ENCODE measurements at regions of chr12 and their contacts with region 1.

Region 1: DNA sequence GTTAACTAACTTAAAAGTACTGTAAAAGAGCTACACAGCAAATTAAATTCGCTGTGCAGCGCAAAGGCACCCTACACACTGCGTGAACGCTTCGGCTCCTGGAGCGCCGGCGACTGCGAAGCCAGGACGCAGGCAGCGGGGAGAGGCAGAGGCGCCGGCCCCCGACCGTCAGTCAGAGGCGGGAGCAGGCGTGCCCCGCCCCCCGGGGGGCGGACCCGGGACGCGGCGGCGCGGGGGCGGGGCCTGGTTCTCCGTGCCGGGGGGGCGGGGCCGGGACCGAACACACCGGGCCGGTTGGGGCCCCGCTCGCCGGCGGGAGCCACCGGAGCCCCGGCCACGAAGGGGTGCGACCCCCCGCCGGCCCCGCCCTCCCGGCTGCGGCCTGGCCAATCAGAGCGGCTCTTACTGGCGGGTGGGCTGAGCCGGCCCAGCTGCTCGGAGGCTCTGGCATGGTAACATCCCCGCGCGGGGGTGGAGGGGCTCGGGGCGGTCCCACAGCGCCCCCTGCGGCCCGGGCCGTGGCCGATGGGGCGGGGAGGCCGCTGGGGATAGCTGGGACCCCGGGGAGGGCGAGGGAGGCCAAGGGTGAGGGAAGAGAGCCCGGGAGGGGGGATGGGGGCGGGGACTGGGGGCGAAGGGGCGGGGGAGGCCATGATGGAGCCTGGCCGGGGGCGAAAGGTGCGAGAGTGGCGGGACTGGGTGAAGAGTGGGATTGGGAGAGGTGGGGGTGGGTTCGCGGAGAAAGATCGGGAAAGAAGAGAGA is at the start of gene PRPF40B:
- DNase-seq: peak; percentile 70 to 93 (median 84)
- ATAC-seq: peak; percentile 76
- H3K4me3 ChIP-seq: peak within 1 kb of the TSS; percentile 70
- H3K4me3 Mint-ChIP-seq: peak within 1 kb of the TSS; percentile 92
- H3K27ac ChIP-seq: peak within 1 kb of the TSS; percentile 58 to 66
- H3K27ac Mint-ChIP-seq: peak within 1 kb of the TSS; percentile 92
- H3K4me1 ChIP-seq: peaks cover 29% of the 10 kb centered on the region
- H3K4me1 Mint-ChIP-seq: peaks cover 30% of the 10 kb centered on the region
- H3K27me3 ChIP-seq: no peaks in the 10 kb centered on the region
- H3K27me3 Mint-ChIP-seq: peaks cover 6% of the 10 kb centered on the region
- CTCF ChIP-seq: peak; percentile 23
- total RNA-seq, gene PRPF40B: 4.7 to 6.5 TPM

Region 2: GRCh38 chr12:49366652-49367380 is 256.5 kb before region 1 on chr12:
- CTCF ChIA-PET with region 1: interaction called, 6 read pairs
- POLR2A ChIA-PET with region 1: interaction called, 16 read pairs
- intact Hi-C with region 1: no loop called
- DNase-seq: peak; percentile 69 to 92 (median 81)
- ATAC-seq: peak; percentile 82
- H3K4me3 ChIP-seq: peak overlapping the region; percentile 88
- H3K4me3 Mint-ChIP-seq: peak overlapping the region; percentile 99
- H3K27ac ChIP-seq: peak overlapping the region; percentile 66 to 70
- H3K27ac Mint-ChIP-seq: peak overlapping the region; percentile 76
- H3K4me1 ChIP-seq: peaks cover 15% of the 10 kb centered on the region
- H3K4me1 Mint-ChIP-seq: peaks cover 30% of the 10 kb centered on the region
- H3K27me3 ChIP-seq: no peaks in the 10 kb centered on the region
- H3K27me3 Mint-ChIP-seq: no peaks in the 10 kb centered on the region
- CTCF ChIP-seq: no peak

Region 3: DNA sequence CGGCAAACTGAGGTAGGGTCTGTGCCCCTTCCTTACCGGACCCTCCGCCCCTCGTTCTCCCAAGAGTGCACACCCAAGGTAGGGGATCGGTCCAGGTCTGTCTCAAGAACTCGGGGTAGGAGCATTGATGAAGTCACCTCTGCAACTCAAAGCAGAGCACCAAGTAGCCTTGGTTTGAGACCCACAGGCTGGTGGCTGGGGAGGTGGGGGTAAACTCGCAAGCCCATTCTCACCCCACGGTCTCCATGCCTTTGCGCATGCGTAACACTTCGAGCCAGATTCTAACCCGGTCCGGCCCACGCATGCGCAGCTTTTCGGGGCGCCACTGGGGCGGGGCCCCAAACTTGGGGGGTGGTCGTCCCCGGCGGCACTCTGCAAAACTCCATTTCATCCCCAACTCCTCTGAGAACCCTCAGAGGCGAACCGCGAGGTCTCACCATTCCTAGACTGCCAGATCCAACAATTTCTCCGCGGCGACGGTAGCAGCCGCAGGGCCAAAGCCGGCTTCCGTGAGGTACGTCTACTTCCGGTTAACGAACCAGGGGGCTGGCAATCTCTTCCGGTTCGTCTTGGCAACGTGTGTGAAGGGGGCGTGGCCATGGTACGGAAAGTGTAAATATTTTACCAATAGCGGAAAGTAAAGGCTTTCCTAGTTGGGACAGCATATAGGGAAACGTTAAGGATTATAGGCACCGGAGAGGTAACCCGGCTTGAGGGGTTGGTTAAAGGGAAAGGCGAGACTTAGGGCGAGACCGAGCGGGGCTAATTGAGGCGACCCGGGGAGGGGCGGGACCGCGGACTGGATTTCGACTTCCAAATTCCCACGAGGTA is 55.5 kb before region 1 on chr12 and contains the start of gene MCRS1:
- CTCF ChIA-PET with region 1: interaction called, 5 read pairs
- POLR2A ChIA-PET with region 1: interaction called, 23 read pairs
- intact Hi-C with region 1: loop called (anchors 1 to 2 kb)
- DNase-seq: peak; percentile 82 to 95 (median 88)
- ATAC-seq: peak; percentile 85
- H3K4me3 ChIP-seq: peak within 1 kb of the TSS; percentile 67
- H3K4me3 Mint-ChIP-seq: peak within 1 kb of the TSS; percentile 97
- H3K27ac ChIP-seq: peak within 1 kb of the TSS; percentile 93 to 94
- H3K27ac Mint-ChIP-seq: peak within 1 kb of the TSS; percentile 99
- H3K4me1 ChIP-seq: peaks cover 49% of the 10 kb centered on the region
- H3K4me1 Mint-ChIP-seq: peaks cover 71% of the 10 kb centered on the region
- H3K27me3 ChIP-seq: no peaks in the 10 kb centered on the region
- H3K27me3 Mint-ChIP-seq: no peaks in the 10 kb centered on the region
- CTCF ChIP-seq: no peak
- total RNA-seq, gene MCRS1: 49.0 to 56.4 TPM

Region 4: DNA sequence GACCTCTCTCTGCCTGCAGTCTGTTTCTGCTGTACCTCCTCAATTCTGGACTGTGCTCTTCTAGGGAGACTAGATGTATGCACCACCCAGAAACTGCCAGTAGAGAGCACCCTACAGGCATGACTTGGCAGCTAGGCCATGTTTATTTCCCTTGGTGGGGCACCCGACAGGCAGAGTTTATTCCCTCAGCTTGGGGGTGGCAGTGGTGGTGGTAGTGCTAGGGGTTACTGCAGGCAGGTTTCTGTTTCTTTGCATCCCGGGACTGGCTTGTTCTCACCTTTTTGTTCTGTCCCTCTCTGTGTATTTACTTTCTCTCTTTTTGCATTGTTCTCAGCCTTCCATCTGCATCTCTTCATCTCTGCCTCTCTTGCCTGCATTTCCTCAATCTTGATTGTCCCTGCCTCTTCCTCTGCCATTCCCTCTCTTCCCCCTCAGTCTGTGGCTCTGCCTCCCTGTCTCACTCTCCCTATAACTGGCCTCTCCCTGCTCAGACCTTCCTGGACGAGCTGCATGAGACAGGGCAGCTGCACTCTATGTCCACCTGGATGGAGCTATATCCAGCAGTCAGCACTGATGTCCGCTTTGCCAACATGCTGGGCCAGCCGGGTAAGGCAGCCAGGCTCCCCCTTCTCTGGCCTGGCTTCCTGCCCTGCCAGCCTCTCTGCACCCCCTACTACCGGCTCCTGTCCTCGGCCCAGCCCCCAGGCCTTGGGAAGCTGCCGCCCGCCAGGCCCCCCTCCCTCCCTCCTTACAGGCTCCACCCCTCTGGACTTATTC is 13.8 kb after region 1 on chr12:
- CTCF ChIA-PET with region 1: interaction called, 26 read pairs
- POLR2A ChIA-PET with region 1: interaction called, 16 read pairs
- intact Hi-C with region 1: no loop called
- DNase-seq: peak; percentile 31 to 79 (median 47)
- ATAC-seq: peak; percentile 99
- H3K4me3 ChIP-seq: no peak overlapping the region
- H3K4me3 Mint-ChIP-seq: no peak overlapping the region
- H3K27ac ChIP-seq: no peak overlapping the region
- H3K27ac Mint-ChIP-seq: peak overlapping the region; percentile 2
- H3K4me1 ChIP-seq: peaks cover 19% of the 10 kb centered on the region
- H3K4me1 Mint-ChIP-seq: peaks cover 25% of the 10 kb centered on the region
- H3K27me3 ChIP-seq: no peaks in the 10 kb centered on the region
- H3K27me3 Mint-ChIP-seq: no peaks in the 10 kb centered on the region
- CTCF ChIP-seq: peak; percentile 54

Region 5: GRCh38 chr12:49828133-49829091 is 205.1 kb after region 1 on chr12 and contains the start of gene NCKAP5L:
- CTCF ChIA-PET with region 1: no interaction called
- POLR2A ChIA-PET with region 1: no interaction called
- intact Hi-C with region 1: loop called in 1 of 2 experiments (anchors 5 kb)
- DNase-seq: peak; percentile 88 to 98 (median 92)
- ATAC-seq: peak; percentile 95
- H3K4me3 ChIP-seq: peak within 1 kb of the TSS; percentile 64
- H3K4me3 Mint-ChIP-seq: peak within 1 kb of the TSS; percentile 98
- H3K27ac ChIP-seq: peak within 1 kb of the TSS; percentile 63 to 72
- H3K27ac Mint-ChIP-seq: peak within 1 kb of the TSS; percentile 89
- H3K4me1 ChIP-seq: peaks cover 31% of the 10 kb centered on the region
- H3K4me1 Mint-ChIP-seq: peaks cover 42% of the 10 kb centered on the region
- H3K27me3 ChIP-seq: no peaks in the 10 kb centered on the region
- H3K27me3 Mint-ChIP-seq: no peaks in the 10 kb centered on the region
- CTCF ChIP-seq: no peak
- total RNA-seq, gene NCKAP5L: 9.2 to 9.8 TPM

Region 6: GRCh38 chr12:50283229-50283923 is 660.1 kb after region 1 on chr12 and contains the start of gene LIMA1:
- CTCF ChIA-PET with region 1: no interaction called
- POLR2A ChIA-PET with region 1: no interaction called
- intact Hi-C with region 1: loop called in 1 of 2 experiments (anchors 10 kb)
- DNase-seq: peak; percentile 86 to 97 (median 92)
- ATAC-seq: peak; percentile 95
- H3K4me3 ChIP-seq: peak within 1 kb of the TSS; percentile 78
- H3K4me3 Mint-ChIP-seq: peak within 1 kb of the TSS; percentile 94
- H3K27ac ChIP-seq: peak within 1 kb of the TSS; percentile 19 to 53
- H3K27ac Mint-ChIP-seq: peak within 1 kb of the TSS; percentile 86
- H3K4me1 ChIP-seq: peaks cover 22% of the 10 kb centered on the region
- H3K4me1 Mint-ChIP-seq: peaks cover 26% of the 10 kb centered on the region
- H3K27me3 ChIP-seq: no peaks in the 10 kb centered on the region
- H3K27me3 Mint-ChIP-seq: no peaks in the 10 kb centered on the region
- CTCF ChIP-seq: no peak
- total RNA-seq, gene LIMA1: 4.6 to 5.1 TPM

Measured in CD4-positive, alpha-beta T cell (primary cell).